Activated CD4-positive, alpha-beta memory T cell treated with anti-CD3 and anti-CD28 coated beads for 36 hours (primary cell): ENCODE measurements at regions of chr2 and their contacts with region 1.

Region 1: GRCh38 chr2:72579591-72580180 is 246.1 kb downstream of the EXOC6B start:
- DNase-seq: no peak
- H3K4me3 Mint-ChIP-seq: no peak overlapping the region
- H3K27ac Mint-ChIP-seq: no peak overlapping the region
- H3K4me1 Mint-ChIP-seq: peaks cover 3% of the 10 kb centered on the region
- H3K27me3 Mint-ChIP-seq: no peaks in the 10 kb centered on the region

Region 2: DNA sequence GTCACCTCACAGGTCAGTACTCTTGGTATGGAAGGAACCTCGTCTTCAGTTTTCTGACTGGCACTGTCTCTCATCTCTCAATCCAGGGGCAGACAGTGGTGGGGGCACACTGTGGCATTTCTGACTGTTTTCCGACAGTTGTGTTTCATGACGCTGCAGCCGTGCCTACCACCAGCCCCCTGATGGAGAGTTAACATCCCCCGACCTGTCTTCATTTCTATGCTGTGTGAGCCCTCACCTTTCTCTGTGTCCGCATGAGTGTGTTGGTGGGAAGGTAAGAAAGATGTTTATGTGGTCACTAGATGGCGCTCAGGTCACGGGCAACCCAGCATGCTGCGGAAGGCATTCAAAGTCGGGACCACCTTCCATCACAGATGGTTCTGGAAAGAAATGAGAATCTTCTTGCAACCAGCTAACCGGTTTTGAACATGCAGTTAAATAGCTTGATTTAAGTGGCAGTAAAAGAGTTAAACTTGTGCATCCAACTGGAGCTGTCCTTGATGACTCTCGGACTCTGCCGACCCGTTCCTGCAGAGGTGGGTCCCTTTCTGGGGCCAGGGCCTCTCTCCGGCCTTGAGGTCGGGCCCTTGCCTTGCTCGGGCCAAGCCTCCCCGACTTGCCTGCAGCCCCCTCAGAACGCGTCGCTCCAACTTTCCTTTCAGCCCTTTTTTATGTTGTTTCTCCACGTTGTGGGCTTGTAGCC is 1034.0 kb before region 1 on chr2:
- CTCF ChIA-PET with region 1: interaction called, 9 read pairs
- POLR2A ChIA-PET with region 1: no interaction called
- intact Hi-C with region 1: loop called (anchors 5 kb)
- DNase-seq: peak; percentile 58
- H3K4me3 Mint-ChIP-seq: peak overlapping the region; percentile 42
- H3K27ac Mint-ChIP-seq: no peak overlapping the region
- H3K4me1 Mint-ChIP-seq: peaks cover 9% of the 10 kb centered on the region
- H3K27me3 Mint-ChIP-seq: peaks cover 19% of the 10 kb centered on the region

Region 3: DNA sequence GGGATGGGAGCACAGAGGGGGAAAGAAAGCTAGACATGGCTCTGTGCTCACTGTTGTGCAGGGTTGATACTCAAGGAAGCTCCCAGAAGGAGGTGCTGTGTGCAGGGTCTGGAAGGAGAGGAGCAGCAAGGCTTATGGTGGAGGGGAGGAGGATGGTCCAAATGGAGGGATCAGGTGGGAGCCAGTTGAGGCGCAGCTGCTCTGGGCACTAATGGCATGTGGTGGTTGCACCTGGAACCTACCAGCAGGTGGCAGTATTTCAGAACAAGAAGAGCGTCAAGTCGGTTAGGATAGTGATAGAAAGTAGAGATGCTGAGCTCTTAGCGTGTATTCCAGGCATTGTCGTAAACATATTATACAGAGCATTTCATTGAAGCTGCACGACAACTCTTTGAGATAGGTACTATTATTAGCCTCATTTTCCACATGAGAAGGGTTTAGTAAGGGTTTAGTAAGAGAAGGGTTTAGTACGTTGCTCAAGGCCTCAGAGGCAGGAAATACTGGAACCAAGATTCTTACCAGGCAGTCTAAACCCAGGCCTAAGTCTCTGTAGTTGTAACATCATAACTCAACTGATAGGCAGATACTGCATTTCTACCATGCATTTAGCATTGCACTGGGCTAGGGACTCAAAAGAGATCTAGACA is 655.7 kb before region 1 on chr2:
- CTCF ChIA-PET with region 1: interaction called, 49 read pairs
- POLR2A ChIA-PET with region 1: no interaction called
- intact Hi-C with region 1: loop called (anchors 2 kb)
- DNase-seq: peak; percentile 63
- H3K4me3 Mint-ChIP-seq: no peak overlapping the region
- H3K27ac Mint-ChIP-seq: no peak overlapping the region
- H3K4me1 Mint-ChIP-seq: no peaks in the 10 kb centered on the region
- H3K27me3 Mint-ChIP-seq: no peaks in the 10 kb centered on the region

Region 4: DNA sequence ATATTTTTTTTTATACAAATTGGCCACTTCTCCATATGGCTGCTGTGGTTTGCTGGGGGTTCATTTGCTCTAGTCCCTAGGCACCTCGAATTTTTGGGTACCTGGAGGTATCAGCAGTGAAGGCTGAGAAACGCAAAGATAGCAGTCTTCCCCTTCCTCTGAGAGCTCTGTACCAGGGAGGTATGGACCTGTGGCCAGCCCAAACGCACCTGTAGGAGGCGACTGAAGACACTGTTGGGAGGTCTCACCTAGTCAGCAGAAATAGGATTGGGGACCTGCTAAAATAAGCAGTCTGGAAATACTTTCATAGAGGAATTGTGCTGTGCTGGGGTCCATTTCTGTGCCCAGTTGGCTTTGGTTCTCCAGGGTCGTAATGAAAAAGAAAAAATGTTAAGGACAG is 139.8 kb before region 1 on chr2:
- CTCF ChIA-PET with region 1: no interaction called
- POLR2A ChIA-PET with region 1: no interaction called
- intact Hi-C with region 1: no loop called
- DNase-seq: no peak
- H3K4me3 Mint-ChIP-seq: no peak overlapping the region
- H3K27ac Mint-ChIP-seq: no peak overlapping the region
- H3K4me1 Mint-ChIP-seq: peaks cover 4% of the 10 kb centered on the region
- H3K27me3 Mint-ChIP-seq: no peaks in the 10 kb centered on the region